Caco-2 (cell line): ENCODE measurements at regions of chr11 and their contacts with region 1.

Region 1: GRCh38 chr11:5204787-5205186 is 4.3 kb upstream of the OR51V1 start:
- DNase-seq: peak; percentile 42 to 61
- H3K4me3 ChIP-seq: no peak overlapping the region
- H3K4me3 Mint-ChIP-seq: no peak overlapping the region
- H3K27ac Mint-ChIP-seq: no peak overlapping the region
- H3K4me1 ChIP-seq: no peaks in the 10 kb centered on the region
- H3K4me1 Mint-ChIP-seq: no peaks in the 10 kb centered on the region
- H3K27me3 ChIP-seq: no peaks in the 10 kb centered on the region
- H3K27me3 Mint-ChIP-seq: peaks cover 8% of the 10 kb centered on the region
- CTCF ChIP-seq: peak; percentile 49 to 73

Region 2: DNA sequence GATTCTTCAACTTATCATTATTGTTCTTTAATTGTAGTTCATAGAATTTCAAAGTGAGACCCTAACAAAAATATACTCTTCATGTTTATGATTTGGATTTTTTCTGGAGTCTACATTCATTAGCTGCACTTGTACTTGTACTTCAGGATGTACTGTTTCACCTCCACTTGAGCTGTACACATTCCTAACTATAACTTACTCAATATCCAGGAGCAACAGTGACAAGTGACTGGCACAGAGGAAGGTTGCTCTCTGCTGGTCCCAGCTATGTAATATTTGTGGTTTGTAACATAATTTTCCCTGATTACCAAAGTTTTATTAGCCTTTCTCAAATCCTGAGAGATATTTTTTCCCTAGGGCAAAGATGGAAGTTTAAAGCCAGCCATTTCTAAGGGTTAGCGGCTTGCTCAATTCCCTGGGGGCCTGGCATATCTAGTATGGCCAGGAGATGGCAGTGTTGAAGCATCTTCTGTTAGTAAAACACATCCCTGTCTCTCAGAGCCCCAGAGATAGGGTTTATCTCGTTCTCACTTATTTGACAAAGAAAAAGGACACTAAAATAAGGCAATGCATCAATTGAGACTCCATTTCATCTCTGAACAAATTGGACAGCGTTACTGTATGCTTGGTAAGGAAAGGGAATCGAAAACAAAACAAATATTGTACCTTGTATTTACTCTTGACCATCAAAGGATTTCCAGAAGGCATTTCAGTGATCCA is 80.8 kb before region 1 on chr11:
- CTCF ChIA-PET with region 1: no interaction called
- POLR2A ChIA-PET with region 1: no interaction called
- intact Hi-C with region 1: loop called (anchors 2 kb)
- DNase-seq: peak; percentile 67 to 78
- H3K4me3 ChIP-seq: no peak overlapping the region
- H3K4me3 Mint-ChIP-seq: no peak overlapping the region
- H3K27ac Mint-ChIP-seq: no peak overlapping the region
- H3K4me1 ChIP-seq: no peaks in the 10 kb centered on the region
- H3K4me1 Mint-ChIP-seq: no peaks in the 10 kb centered on the region
- H3K27me3 ChIP-seq: no peaks in the 10 kb centered on the region
- H3K27me3 Mint-ChIP-seq: peaks cover 8% of the 10 kb centered on the region
- CTCF ChIP-seq: peak; percentile 69 to 87

Region 3: GRCh38 chr11:5178046-5178837 is 26.5 kb before region 1 on chr11:
- CTCF ChIA-PET with region 1: no interaction called
- POLR2A ChIA-PET with region 1: no interaction called
- intact Hi-C with region 1: no loop called
- DNase-seq: no peak
- H3K4me3 ChIP-seq: no peak overlapping the region
- H3K4me3 Mint-ChIP-seq: no peak overlapping the region
- H3K27ac Mint-ChIP-seq: no peak overlapping the region
- H3K4me1 ChIP-seq: no peaks in the 10 kb centered on the region
- H3K4me1 Mint-ChIP-seq: no peaks in the 10 kb centered on the region
- H3K27me3 ChIP-seq: no peaks in the 10 kb centered on the region
- H3K27me3 Mint-ChIP-seq: peaks cover 2% of the 10 kb centered on the region
- CTCF ChIP-seq: no peak

Region 4: GRCh38 chr11:5291207-5291838 is 86.5 kb after region 1 on chr11:
- CTCF ChIA-PET with region 1: no interaction called
- POLR2A ChIA-PET with region 1: no interaction called
- intact Hi-C with region 1: loop called (anchors 1 kb)
- DNase-seq: peak in 1 of 2 experiments; percentile 17
- H3K4me3 ChIP-seq: no peak overlapping the region
- H3K4me3 Mint-ChIP-seq: no peak overlapping the region
- H3K27ac Mint-ChIP-seq: no peak overlapping the region
- H3K4me1 ChIP-seq: no peaks in the 10 kb centered on the region
- H3K4me1 Mint-ChIP-seq: no peaks in the 10 kb centered on the region
- H3K27me3 ChIP-seq: no peaks in the 10 kb centered on the region
- H3K27me3 Mint-ChIP-seq: peaks cover 2% of the 10 kb centered on the region
- CTCF ChIP-seq: peak; percentile 55 to 71

Region 5: DNA sequence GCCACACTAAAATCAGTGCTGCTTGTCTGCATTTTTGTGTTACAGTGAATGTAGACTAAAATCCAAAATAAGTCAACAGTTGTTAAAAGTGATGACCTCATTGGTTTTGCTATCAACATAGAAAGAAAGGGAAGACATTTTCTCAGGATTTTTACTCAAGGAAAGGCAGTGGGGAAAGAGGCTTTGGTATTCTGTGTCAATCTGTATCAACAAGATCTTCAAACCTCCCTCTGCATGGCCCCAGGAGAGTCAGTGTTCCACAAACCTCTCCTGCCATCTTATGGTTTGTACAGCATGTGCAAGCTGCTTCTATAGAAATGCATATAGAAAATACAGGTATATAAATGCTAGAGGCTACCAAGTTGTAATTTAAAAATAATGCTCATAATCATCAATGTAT is 165.0 kb after region 1 on chr11:
- CTCF ChIA-PET with region 1: no interaction called
- POLR2A ChIA-PET with region 1: no interaction called
- intact Hi-C with region 1: loop called (anchors 1 kb)
- DNase-seq: peak in 1 of 2 experiments; percentile 13
- H3K4me3 ChIP-seq: no peak overlapping the region
- H3K4me3 Mint-ChIP-seq: no peak overlapping the region
- H3K27ac Mint-ChIP-seq: no peak overlapping the region
- H3K4me1 ChIP-seq: no peaks in the 10 kb centered on the region
- H3K4me1 Mint-ChIP-seq: no peaks in the 10 kb centered on the region
- H3K27me3 ChIP-seq: no peaks in the 10 kb centered on the region
- H3K27me3 Mint-ChIP-seq: peaks cover 15% of the 10 kb centered on the region
- CTCF ChIP-seq: peak in 1 of 2 experiments; percentile 20

Region 6: GRCh38 chr11:5380740-5381342 is 176.1 kb after region 1 on chr11:
- CTCF ChIA-PET with region 1: interaction called, 3 read pairs
- POLR2A ChIA-PET with region 1: no interaction called
- intact Hi-C with region 1: loop called (anchors 1 kb)
- DNase-seq: peak; percentile 71 to 73
- H3K4me3 ChIP-seq: no peak overlapping the region
- H3K4me3 Mint-ChIP-seq: no peak overlapping the region
- H3K27ac Mint-ChIP-seq: no peak overlapping the region
- H3K4me1 ChIP-seq: no peaks in the 10 kb centered on the region
- H3K4me1 Mint-ChIP-seq: no peaks in the 10 kb centered on the region
- H3K27me3 ChIP-seq: no peaks in the 10 kb centered on the region
- H3K27me3 Mint-ChIP-seq: peaks cover 6% of the 10 kb centered on the region
- CTCF ChIP-seq: peak; percentile 78 to 92

Region 7: GRCh38 chr11:5550440-5551095 is 345.8 kb after region 1 on chr11:
- CTCF ChIA-PET with region 1: no interaction called
- POLR2A ChIA-PET with region 1: no interaction called
- intact Hi-C with region 1: loop called (anchors 10 kb)
- DNase-seq: no peak
- H3K4me3 ChIP-seq: no peak overlapping the region
- H3K4me3 Mint-ChIP-seq: no peak overlapping the region
- H3K27ac Mint-ChIP-seq: no peak overlapping the region
- H3K4me1 ChIP-seq: no peaks in the 10 kb centered on the region
- H3K4me1 Mint-ChIP-seq: no peaks in the 10 kb centered on the region
- H3K27me3 ChIP-seq: no peaks in the 10 kb centered on the region
- H3K27me3 Mint-ChIP-seq: peaks cover 11% of the 10 kb centered on the region
- CTCF ChIP-seq: no peak

Region 8: DNA sequence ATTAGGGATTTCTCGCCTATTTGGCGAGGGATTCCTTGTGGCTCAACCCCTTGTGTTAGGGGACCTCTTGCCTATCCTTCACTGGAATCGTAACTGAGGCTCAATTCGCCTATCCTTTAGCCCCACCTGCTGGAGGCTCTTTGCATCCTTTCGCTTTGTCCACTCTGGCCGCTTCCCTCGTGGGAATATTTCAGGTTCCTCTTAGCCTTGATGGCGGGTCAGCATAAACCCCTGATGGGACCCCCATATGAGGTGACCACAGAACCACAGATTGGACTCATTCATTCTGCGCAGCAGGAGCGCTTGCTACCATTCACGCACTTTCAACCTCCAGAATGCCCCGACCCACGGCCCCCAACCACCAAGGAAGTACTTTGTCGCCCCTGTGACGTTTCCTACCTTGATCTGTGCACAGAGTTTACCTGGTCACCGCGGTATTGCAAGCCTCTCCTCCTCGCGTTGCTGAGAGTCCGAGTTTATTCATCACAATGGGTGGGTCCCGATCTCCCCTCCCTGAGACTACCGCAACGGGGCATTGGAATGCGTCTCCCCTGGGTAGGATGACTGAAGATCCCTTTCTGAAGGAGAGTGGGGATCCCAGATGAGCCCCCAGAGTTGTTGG is 603.8 kb after region 1 on chr11 and contains the start of gene OR52N2:
- CTCF ChIA-PET with region 1: no interaction called
- POLR2A ChIA-PET with region 1: no interaction called
- intact Hi-C with region 1: loop called (anchors 1 kb)
- DNase-seq: peak; percentile 71 to 80
- H3K4me3 ChIP-seq: peak within 1 kb of the TSS; percentile 26
- H3K4me3 Mint-ChIP-seq: peak within 1 kb of the TSS; percentile 61
- H3K27ac Mint-ChIP-seq: no peak within 1 kb of the TSS
- H3K4me1 ChIP-seq: no peaks in the 10 kb centered on the region; the same call in 1 of the 2 replicates
- H3K4me1 Mint-ChIP-seq: peaks cover 6% of the 10 kb centered on the region
- H3K27me3 ChIP-seq: no peaks in the 10 kb centered on the region
- H3K27me3 Mint-ChIP-seq: peaks cover 16% of the 10 kb centered on the region
- CTCF ChIP-seq: peak; percentile 86 to 94
- total RNA-seq, gene OR52N2: not detected in 2 replicates